PC-9 (cell line): ENCODE measurements at regions of chr7 and their contacts with region 1.

Region 1: GRCh38 chr7:51344406-51345138 is 28.0 kb upstream of the COBL start:
- DNase-seq: peak; percentile 56 to 93
- H3K4me3 ChIP-seq: no peak overlapping the region
- H3K27ac ChIP-seq: no peak overlapping the region
- H3K4me1 ChIP-seq: peaks cover 34% of the 10 kb centered on the region
- H3K27me3 ChIP-seq: no peaks in the 10 kb centered on the region
- CTCF ChIP-seq: no peak

Region 2: GRCh38 chr7:51034521-51035264 is 309.9 kb before region 1 on chr7:
- CTCF ChIA-PET with region 1: no interaction called
- POLR2A ChIA-PET with region 1: no interaction called
- intact Hi-C with region 1: no loop called
- DNase-seq: peak; percentile 18 to 79
- H3K4me3 ChIP-seq: no peak overlapping the region
- H3K27ac ChIP-seq: no peak overlapping the region
- H3K4me1 ChIP-seq: peaks cover 25% of the 10 kb centered on the region
- H3K27me3 ChIP-seq: no peaks in the 10 kb centered on the region
- CTCF ChIP-seq: no peak

Region 3: DNA sequence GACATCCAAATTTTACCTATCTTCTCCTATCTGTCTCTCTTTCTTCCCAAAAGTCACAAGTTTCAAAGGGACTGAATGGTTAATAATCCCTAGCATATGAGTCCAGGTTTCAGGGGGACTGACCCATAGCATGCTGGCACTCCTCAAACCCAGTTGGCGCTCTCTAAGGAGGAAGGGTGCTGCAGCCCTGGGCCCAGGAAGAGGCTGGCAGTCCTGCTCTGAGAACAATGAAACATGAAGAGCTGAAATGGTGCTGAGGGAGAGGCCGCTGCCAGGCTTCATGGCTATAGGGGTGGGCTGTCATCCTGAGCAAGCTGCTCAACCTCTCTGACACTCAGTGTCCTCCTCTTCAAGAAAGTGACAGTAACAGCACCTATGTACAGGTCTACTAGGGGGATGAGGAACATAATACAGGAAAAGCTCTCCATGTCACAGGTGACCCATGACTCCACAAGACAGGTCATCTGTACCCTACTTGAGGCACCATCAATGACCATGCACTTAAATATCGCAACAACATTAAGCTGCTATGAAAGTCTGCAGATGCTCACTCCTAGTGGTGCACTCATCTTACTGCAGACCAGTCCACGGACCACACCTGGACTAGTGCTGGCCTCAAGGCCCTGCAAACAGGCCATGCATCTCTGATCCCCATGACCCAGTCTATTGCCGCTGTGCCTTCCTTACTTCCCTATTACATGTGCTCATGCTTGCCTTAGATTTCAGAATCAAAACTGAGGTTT is 45.0 kb before region 1 on chr7:
- CTCF ChIA-PET with region 1: no interaction called
- POLR2A ChIA-PET with region 1: interaction called, 6 read pairs
- intact Hi-C with region 1: loop called (anchors 1 kb)
- DNase-seq: no peak
- H3K4me3 ChIP-seq: no peak overlapping the region
- H3K27ac ChIP-seq: no peak overlapping the region
- H3K4me1 ChIP-seq: peaks cover 37% of the 10 kb centered on the region
- H3K27me3 ChIP-seq: no peaks in the 10 kb centered on the region
- CTCF ChIP-seq: no peak; the same call in 1 of the 2 replicates

Region 4: DNA sequence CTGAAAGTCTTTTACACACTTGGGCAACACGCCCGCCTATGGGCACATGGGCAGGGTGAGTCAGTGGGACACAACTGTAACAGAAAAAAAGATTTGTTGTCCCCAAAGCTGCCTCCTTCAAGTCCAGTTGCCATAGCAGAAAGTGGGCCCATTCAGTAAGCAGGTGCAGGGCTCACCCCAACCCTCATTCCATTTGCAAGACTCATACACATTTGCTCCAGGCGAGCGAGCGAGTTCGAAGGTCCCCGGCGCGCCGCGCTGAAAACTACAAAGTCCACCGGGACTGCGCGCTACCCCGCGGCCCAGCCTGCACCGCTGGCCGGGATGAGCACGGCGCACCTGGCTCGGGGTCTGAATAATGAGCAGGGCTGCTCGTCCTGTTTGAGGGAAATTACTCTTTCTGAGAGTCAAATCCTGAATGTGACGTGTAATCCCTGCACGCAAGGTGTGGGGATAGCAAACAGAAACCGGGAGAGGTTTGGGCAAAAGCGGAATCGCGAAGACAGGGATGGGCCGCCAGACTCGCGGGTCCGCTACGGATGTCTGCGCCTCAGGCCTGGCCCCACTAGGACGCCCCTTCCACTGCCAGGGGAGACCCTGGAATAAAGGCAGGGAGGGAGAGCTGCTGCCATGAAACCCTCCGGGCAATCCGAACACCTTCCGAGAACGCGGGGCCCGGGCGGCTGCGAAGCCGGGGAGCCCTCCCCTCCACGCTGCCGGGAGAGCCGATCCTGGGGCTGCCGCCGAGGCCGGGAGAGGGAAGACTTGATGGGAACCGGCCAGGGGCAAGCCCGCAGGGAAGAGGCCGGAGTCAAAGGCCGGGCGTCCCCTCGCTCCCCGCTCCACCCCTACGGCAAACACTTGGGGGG is 28.9 kb before region 1 on chr7:
- CTCF ChIA-PET with region 1: no interaction called
- POLR2A ChIA-PET with region 1: interaction called, 5 read pairs
- intact Hi-C with region 1: loop called (anchors 1 kb)
- DNase-seq: peak; percentile 92 to 98
- H3K4me3 ChIP-seq: peak overlapping the region; percentile 71
- H3K27ac ChIP-seq: peak overlapping the region; percentile 86
- H3K4me1 ChIP-seq: peaks cover 34% of the 10 kb centered on the region
- H3K27me3 ChIP-seq: no peaks in the 10 kb centered on the region
- CTCF ChIP-seq: no peak

Region 5: DNA sequence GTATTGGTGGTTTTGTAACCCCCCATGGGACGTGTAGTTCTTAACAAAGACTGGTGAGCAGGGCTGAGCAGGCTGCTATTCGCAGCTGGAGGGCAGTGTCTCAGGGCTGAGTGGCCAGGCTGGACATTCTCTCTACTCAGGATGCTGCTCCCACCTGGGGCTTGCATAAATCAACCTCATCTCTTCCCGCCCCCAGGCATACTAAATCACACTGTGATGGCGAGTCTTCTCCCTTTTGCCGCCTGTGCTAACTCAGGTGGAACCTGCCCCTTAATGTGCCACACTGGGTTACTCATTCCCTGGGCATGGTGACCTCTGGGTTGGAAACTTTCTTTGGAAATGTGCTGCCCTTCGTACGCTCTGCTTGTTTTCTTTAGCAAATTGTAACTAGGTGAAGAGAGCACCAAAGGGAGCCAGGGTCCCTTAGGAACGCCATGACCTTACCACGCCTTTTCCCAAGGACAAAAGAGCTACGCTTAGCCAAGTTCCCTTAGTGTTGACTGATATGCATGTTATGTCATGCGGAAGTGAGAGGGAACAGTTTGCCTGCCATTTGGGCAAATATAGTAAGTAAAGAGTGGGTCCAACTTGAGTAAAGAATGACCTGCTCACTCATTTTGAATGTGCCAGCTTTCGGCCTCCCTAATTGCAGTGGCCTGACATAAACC is 12.4 kb after region 1 on chr7:
- CTCF ChIA-PET with region 1: no interaction called
- POLR2A ChIA-PET with region 1: no interaction called
- intact Hi-C with region 1: no loop called
- DNase-seq: peak in 1 of 2 experiments; percentile 51
- H3K4me3 ChIP-seq: no peak overlapping the region
- H3K27ac ChIP-seq: no peak overlapping the region
- H3K4me1 ChIP-seq: peaks cover 6% of the 10 kb centered on the region; the same call in 1 of the 2 replicates
- H3K27me3 ChIP-seq: no peaks in the 10 kb centered on the region
- CTCF ChIP-seq: no peak

Region 6: GRCh38 chr7:51366930-51367613 is 22.5 kb after region 1 on chr7:
- CTCF ChIA-PET with region 1: interaction called, 3 read pairs
- POLR2A ChIA-PET with region 1: interaction called, 6 read pairs
- intact Hi-C with region 1: loop called (anchors 1 kb)
- DNase-seq: peak; percentile 54 to 61
- H3K4me3 ChIP-seq: no peak overlapping the region
- H3K27ac ChIP-seq: no peak overlapping the region
- H3K4me1 ChIP-seq: peaks cover 7% of the 10 kb centered on the region
- H3K27me3 ChIP-seq: no peaks in the 10 kb centered on the region
- CTCF ChIP-seq: peak; percentile 96